AG04449 (cell line): ENCODE measurements at regions of chr7 and their contacts with region 1.

Region 1: DNA sequence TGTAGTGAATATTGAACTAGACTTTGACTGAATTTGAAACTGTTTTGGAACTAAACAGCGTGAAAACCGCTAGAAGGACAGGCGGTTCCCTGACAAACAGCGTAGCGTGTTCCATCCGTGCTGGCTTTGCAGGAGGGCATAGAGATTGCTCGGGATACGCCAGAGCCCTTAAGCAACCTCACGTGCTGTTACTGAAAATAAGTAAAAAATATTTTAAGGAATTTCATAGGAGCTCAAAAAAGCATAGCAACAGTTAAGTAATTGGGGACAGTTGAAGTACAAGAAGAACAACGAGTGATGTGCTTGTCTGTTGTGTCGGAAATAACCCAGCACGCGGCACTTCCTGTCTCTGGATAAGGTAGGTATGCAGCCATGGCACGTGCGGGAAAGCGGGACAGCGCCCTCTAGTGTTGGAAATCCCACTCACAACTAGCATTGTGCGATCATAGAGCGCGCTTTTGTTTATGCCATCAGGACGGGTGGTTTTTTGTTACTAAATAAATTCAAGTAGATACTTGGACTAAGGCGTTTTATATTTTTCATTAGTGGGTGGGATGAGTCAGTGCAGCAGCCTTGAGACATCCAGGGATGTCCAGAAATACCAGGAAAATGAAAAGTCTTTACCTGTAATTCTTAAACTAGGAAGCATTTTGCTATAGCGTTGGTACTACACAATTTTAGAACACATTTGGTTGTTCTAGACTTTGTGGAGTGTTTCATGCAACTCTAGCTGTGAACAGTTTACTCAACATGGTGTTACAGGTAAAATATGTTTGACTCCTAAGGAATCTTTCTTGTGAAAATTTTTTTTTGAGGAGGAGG is 50.4 kb downstream of the DNAJB6 start:
- DNase-seq: no peak
- H3K4me3 ChIP-seq: no peak overlapping the region
- CTCF ChIP-seq: peak; percentile 82

Region 2: GRCh38 chr7:157339777-157340677 is 47.2 kb before region 1 on chr7:
- CTCF ChIA-PET with region 1: interaction called, 17 read pairs
- POLR2A ChIA-PET with region 1: no interaction called
- DNase-seq: no peak
- H3K4me3 ChIP-seq: peak overlapping the region; percentile 12; the same call in 1 of the 2 replicates
- CTCF ChIP-seq: peak; percentile 76

Region 3: DNA sequence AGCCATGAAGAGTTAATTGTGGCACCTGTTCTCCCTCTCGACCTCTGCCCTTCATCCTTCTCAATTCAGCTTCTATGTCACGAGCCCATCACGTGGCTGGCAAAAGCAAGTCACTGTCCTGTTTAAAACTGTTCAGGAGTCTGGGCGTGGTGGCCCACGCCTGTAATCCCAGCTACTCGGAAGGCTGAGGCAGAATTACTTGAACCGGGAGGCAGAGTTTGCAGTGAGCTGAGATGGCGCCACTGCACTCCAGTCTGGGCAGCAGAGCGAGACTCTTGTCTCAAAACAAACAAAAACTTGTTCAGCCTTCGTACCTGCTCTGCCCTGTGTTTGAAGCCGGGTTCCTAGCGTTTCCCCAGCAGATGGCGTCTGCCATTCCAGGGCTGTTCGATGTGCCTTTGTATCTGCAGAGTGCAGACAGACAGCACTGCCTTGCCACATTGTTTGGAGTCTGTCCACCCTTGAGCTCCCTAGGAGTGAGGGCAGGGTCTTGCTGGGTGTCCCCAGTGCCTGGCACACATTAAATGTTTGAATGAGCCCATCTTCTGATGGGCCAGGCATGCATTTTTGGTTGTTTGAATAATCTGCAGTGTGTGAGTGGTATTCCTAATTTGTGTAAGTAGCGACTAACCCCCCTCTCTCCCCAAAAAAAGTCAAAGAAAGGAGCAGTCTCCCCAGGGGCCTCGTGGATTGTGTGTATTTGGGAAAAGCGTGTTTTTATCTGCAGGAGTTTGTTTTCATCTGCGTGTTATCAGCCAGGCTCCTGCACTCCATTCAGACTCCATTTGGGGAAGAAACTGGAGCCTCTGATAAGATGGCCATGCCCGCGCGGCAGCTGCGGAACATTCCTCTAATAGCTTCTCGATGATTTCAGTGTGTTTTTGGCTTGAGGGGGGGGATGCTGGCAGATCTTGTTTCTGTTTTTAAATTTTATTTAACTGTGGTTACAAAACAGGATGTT is 10.8 kb after region 1 on chr7:
- CTCF ChIA-PET with region 1: interaction called, 46 read pairs
- POLR2A ChIA-PET with region 1: no interaction called
- DNase-seq: peak; percentile 34
- H3K4me3 ChIP-seq: peak overlapping the region; percentile 6; the same call in 1 of the 2 replicates
- CTCF ChIP-seq: peak; percentile 55

Region 4: GRCh38 chr7:157404845-157405481 is 17.8 kb after region 1 on chr7:
- CTCF ChIA-PET with region 1: interaction called, 12 read pairs
- POLR2A ChIA-PET with region 1: interaction called, 4 read pairs
- DNase-seq: peak; percentile 58
- H3K4me3 ChIP-seq: no peak overlapping the region
- CTCF ChIP-seq: no peak

Region 5: DNA sequence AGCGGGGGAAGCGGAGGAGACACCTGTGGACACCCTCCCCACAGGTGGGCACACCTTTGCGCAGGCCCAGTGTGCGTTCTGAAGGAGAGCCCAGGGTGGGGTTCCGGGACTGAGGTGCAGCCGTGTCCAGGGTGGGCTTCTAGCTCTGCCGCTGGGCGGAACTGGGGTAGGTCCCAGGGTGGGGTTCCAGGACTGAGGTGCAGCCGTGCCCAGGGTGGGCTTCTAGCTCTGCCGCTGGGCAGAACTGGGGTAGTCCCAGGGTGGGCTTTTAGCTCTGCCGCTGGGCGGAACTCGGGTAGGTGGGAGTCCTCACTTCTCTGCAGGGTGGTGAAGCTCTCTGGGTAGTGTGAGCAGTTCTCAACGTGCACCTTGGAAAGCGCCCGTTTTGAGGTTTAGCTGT is 28.3 kb after region 1 on chr7:
- CTCF ChIA-PET with region 1: no interaction called
- POLR2A ChIA-PET with region 1: no interaction called
- DNase-seq: no peak
- H3K4me3 ChIP-seq: no peak overlapping the region
- CTCF ChIP-seq: no peak

Region 6: GRCh38 chr7:157633465-157634185 is 246.4 kb after region 1 on chr7:
- CTCF ChIA-PET with region 1: no interaction called
- POLR2A ChIA-PET with region 1: no interaction called
- DNase-seq: no peak
- H3K4me3 ChIP-seq: no peak overlapping the region
- CTCF ChIP-seq: no peak